ENCODE measurements at regions of chr18 and their contacts with region 1.

Region 1: GRCh38 chr18:9069601-9070000 is 32.9 kb upstream of the NDUFV2 start:
- DNase-seq: no peak
- H3K4me3 Mint-ChIP-seq: no peak overlapping the region
- H3K27ac Mint-ChIP-seq: no peak overlapping the region
- H3K4me1 Mint-ChIP-seq: peaks cover 23% of the 10 kb centered on the region
- H3K27me3 Mint-ChIP-seq: no peaks in the 10 kb centered on the region

Region 2: DNA sequence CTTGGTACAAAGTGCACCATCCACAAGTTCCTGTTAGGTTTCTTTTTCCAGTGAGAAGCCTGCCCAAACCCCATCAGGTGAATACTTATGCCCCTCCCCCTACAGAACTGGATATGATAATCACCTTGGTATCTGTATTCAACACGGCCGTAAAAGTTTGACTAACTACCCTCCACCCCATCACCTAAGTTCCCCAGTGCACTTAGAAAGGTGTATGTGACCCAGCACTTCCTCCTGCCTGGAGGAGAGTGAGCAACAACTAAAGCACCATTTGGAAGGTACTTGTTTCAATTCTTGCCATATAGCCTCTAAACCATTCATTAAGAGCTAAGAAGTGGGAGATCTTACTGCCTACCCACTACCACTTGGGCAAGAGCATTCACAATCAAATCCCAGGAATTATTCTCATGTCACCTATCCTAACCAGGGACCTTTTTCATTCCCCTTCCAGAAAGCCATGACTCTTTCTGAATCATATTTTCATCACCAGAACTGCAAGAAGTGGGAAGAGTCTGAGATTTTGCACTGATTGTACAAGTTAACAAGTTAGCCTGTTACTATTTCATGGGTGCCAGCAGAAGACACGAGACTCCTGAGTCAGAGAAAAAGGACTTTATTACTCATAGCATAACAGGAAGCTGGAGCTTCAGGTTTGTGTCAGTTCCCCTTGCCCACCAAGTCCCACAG is 20.6 kb before region 1 on chr18:
- CTCF ChIA-PET with region 1: no interaction called
- POLR2A ChIA-PET with region 1: no interaction called
- DNase-seq: no peak
- H3K4me3 Mint-ChIP-seq: no peak overlapping the region
- H3K27ac Mint-ChIP-seq: no peak overlapping the region
- H3K4me1 Mint-ChIP-seq: peaks cover 13% of the 10 kb centered on the region
- H3K27me3 Mint-ChIP-seq: peaks cover 3% of the 10 kb centered on the region

Region 3: DNA sequence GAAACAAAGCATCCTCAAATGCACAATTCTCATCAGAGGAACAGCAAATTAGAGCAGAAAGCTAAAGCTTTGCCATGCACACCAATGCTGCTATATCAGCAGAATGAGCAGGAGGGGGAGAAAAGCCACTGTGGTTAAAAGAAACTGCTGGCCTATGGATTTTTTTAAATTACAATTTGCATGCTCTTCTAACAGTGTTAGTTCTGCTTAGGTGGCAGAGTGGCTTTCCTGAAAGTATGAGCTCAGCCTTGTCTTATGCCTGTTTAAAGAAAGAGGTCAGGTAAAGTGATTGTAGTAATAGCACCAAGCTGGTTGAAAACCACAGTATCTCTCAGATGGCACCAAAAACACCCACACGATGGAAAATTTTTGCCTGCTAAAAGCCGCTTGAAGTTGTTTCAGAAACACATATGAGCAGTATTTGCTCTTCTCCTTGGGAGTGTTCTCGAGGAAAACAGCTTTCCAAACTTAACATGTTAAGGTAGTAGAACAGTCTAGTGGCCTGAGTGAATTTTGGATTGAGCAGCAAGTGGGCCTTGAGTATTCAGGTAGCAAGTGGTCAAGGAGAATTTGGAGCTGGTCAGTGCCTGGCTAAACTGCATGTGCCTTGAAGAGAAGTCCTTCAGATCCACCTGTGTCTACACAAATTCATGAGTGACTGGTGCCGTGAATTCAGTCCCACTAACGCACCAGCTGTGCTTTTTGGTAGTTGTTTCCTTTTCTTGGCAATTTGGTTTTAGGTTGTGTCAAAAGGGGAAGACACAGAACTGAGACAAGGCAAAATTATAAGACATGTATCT is 13.3 kb after region 1 on chr18:
- CTCF ChIA-PET with region 1: interaction called, 17 read pairs
- POLR2A ChIA-PET with region 1: no interaction called
- DNase-seq: peak; percentile 59
- H3K4me3 Mint-ChIP-seq: peak overlapping the region; percentile 62
- H3K27ac Mint-ChIP-seq: peak overlapping the region; percentile 96
- H3K4me1 Mint-ChIP-seq: peaks cover 64% of the 10 kb centered on the region
- H3K27me3 Mint-ChIP-seq: no peaks in the 10 kb centered on the region

Region 4: GRCh38 chr18:9126337-9126736 is 56.7 kb after region 1 on chr18:
- CTCF ChIA-PET with region 1: no interaction called
- POLR2A ChIA-PET with region 1: no interaction called
- DNase-seq: no peak
- H3K4me3 Mint-ChIP-seq: no peak overlapping the region
- H3K27ac Mint-ChIP-seq: no peak overlapping the region
- H3K4me1 Mint-ChIP-seq: peaks cover 47% of the 10 kb centered on the region
- H3K27me3 Mint-ChIP-seq: no peaks in the 10 kb centered on the region